Pancreas (tissue), 10 donors: ENCODE measurements at regions of chr12 and their contacts with region 1.

Region 1: GRCh38 chr12:53675651-53676453 is at the start of gene ATP5MC2:
- DNase-seq: peak; percentile 95 to 99 (median 97)
- ATAC-seq: peak; percentile 96 to 97 (median 96)
- H3K4me3 ChIP-seq: peak within 1 kb of the TSS; percentile 33 to 84 (median 61)
- H3K27ac ChIP-seq: peak within 1 kb of the TSS; percentile 58 to 89 (median 78)
- H3K4me1 ChIP-seq: peaks cover 5 to 17% (median 8%) of the 10 kb centered on the region in 3 donors
- H3K27me3 ChIP-seq: no peaks in the 10 kb centered on the region
- CTCF ChIP-seq: peak; percentile 95 to 99 (median 98)
- total RNA-seq, gene ATP5MC2: 134 to 229 (median 180) TPM

Region 2: GRCh38 chr12:53427905-53428594 is 247.8 kb before region 1 on chr12:
- intact Hi-C with region 1: no loop called
- DNase-seq: peak in 1 of 6 donors; percentile 33
- ATAC-seq: peak in 2 of 4 donors; percentile 13 to 47
- H3K4me3 ChIP-seq: no peak overlapping the region
- H3K27ac ChIP-seq: no peak overlapping the region
- H3K4me1 ChIP-seq: peaks cover 7 to 20% (median 9%) of the 10 kb centered on the region in 3 donors
- H3K27me3 ChIP-seq: no peaks in the 10 kb centered on the region
- CTCF ChIP-seq: no peak

Region 3: DNA sequence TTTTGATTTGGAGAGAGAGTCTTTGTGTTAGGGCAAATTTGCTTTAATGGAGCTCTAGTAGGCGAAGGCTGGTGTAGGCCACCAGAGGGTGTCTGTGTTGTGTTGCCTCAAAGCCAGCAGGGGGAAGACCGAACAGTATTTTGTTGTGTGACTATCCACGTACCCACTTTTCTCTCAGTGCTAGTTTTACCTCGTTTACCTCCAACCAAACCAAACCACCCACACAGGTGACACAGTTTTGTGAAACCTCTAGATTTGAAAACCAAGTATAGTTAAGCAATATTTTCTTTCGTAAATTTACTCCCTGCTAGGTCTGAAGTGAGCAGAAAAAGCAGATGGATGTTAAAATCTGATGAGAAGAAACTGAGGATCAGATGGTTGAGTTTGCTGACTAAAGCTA is 132.3 kb before region 1 on chr12:
- intact Hi-C with region 1: loop called in 2 of 3 experiments (anchors 5 kb)
- DNase-seq: peak in 3 of 6 donors; percentile 29 to 49 (median 31)
- ATAC-seq: peak; percentile 51 to 93 (median 89)
- H3K4me3 ChIP-seq: no peak overlapping the region
- H3K27ac ChIP-seq: peak overlapping the region in 2 of 4 donors; percentile 34 to 66
- H3K4me1 ChIP-seq: peaks cover 8 to 12% (median 11%) of the 10 kb centered on the region in 3 donors
- H3K27me3 ChIP-seq: no peaks in the 10 kb centered on the region
- CTCF ChIP-seq: peak in 3 of 4 donors; percentile 38 to 61 (median 54)

Region 4: GRCh38 chr12:53811606-53812005 is 135.8 kb after region 1 on chr12:
- intact Hi-C with region 1: no loop called
- DNase-seq: no peak
- ATAC-seq: no peak
- H3K4me3 ChIP-seq: no peak overlapping the region
- H3K27ac ChIP-seq: no peak overlapping the region
- H3K4me1 ChIP-seq: no peaks in the 10 kb centered on the region
- H3K27me3 ChIP-seq: no peaks in the 10 kb centered on the region
- CTCF ChIP-seq: no peak

Region 5: DNA sequence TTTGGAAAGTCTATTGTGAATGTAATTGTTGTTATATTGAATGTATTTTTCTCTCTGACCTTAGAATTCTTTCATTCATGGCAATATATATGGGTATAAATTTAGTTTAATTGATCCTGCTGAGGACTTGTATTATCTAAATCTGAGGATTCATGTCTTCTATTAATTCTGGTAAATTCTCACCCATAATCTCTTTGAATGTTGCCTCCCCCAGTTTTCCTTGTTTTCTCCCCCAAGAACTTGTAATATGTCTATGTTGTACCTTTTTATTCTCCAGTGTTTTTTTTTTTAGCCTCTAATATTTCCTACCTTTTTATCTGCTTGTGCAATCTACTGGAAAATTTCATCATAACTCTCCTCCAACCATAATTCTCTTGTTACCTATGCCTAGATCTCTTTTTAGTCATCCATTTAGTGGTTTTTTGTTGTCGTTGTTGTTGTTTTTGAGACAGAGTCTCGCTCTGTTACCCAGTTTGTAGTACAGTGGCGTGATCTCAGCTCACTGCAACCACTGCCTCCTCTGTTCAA is 241.3 kb after region 1 on chr12:
- intact Hi-C with region 1: no loop called
- DNase-seq: no peak
- ATAC-seq: no peak
- H3K4me3 ChIP-seq: no peak overlapping the region
- H3K27ac ChIP-seq: no peak overlapping the region
- H3K4me1 ChIP-seq: no peaks in the 10 kb centered on the region
- H3K27me3 ChIP-seq: peaks cover 0 to 49% (median 5%) of the 10 kb centered on the region in 4 donors
- CTCF ChIP-seq: no peak